Activated CD8-positive, alpha-beta memory T cell treated with anti-CD3 and anti-CD28 coated beads, Interleukin-2, amount 10 ng/mL, durations not matched to agents 7 days and 5 days (primary cell): ENCODE measurements at regions of chr6 and their contacts with region 1.

Region 1: DNA sequence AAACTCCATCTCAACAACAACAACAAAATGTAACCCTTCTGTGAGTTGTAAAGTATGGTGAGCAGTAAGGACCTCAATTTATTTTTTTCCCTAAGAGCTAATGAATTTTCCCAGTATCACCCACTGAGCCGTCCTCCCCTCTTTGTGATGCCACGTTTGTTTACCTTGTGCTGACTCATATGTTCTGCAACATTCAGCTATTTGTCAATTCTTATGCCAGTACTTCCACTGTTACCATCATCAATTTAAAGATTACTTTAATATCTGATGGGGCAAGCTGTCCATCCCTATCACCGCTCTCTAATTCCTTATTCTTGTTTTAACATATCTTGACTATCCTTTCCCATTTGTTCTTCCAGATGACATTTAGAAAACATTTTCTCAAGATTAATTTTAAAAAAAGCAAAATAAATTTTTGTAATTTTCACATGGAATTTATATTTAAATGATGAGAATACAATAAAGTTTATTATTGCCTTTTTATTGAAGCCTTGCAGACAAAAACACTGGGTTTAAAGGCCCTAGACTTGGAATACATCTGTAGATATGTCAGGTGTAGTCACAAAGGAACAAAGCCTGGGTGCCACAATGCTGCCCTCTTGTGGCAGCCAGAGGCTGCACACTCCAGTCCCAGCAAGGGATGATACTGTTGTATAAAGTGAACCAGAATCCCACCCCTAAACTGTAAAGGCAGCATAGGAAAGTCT is 37.4 kb downstream of the MAK start:
- DNase-seq: peak; percentile 76
- ATAC-seq: peak; percentile 95
- H3K4me3 Mint-ChIP-seq: no peak overlapping the region
- H3K27ac Mint-ChIP-seq: no peak overlapping the region
- H3K4me1 Mint-ChIP-seq: peaks cover 3% of the 10 kb centered on the region
- H3K27me3 Mint-ChIP-seq: no peaks in the 10 kb centered on the region

Region 2: GRCh38 chr6:10478187-10479040 is 322.6 kb before region 1 on chr6:
- CTCF ChIA-PET with region 1: interaction called, 50 read pairs
- DNase-seq: no peak
- ATAC-seq: peak; percentile 33
- H3K4me3 Mint-ChIP-seq: no peak overlapping the region
- H3K27ac Mint-ChIP-seq: no peak overlapping the region
- H3K4me1 Mint-ChIP-seq: peaks cover 2% of the 10 kb centered on the region
- H3K27me3 Mint-ChIP-seq: peaks cover 28% of the 10 kb centered on the region

Region 3: GRCh38 chr6:10510592-10511367 is 290.2 kb before region 1 on chr6:
- CTCF ChIA-PET with region 1: interaction called, 23 read pairs
- DNase-seq: peak; percentile 66
- ATAC-seq: peak; percentile 89
- H3K4me3 Mint-ChIP-seq: no peak overlapping the region
- H3K27ac Mint-ChIP-seq: no peak overlapping the region
- H3K4me1 Mint-ChIP-seq: peaks cover 9% of the 10 kb centered on the region
- H3K27me3 Mint-ChIP-seq: peaks cover 11% of the 10 kb centered on the region

Region 4: GRCh38 chr6:10837995-10838793 is 37.2 kb after region 1 on chr6 and contains the start of gene MAK:
- CTCF ChIA-PET with region 1: interaction called, 10 read pairs
- DNase-seq: peak; percentile 92
- ATAC-seq: peak; percentile 92
- H3K4me3 Mint-ChIP-seq: peak within 1 kb of the TSS; percentile 77
- H3K27ac Mint-ChIP-seq: peak within 1 kb of the TSS; percentile 95
- H3K4me1 Mint-ChIP-seq: peaks cover 31% of the 10 kb centered on the region
- H3K27me3 Mint-ChIP-seq: peaks cover 34% of the 10 kb centered on the region
- total RNA-seq, gene MAK: 0.26 to 0.82 TPM